ENCODE measurements at regions of chr16 and their contacts with region 1.

Region 1: DNA sequence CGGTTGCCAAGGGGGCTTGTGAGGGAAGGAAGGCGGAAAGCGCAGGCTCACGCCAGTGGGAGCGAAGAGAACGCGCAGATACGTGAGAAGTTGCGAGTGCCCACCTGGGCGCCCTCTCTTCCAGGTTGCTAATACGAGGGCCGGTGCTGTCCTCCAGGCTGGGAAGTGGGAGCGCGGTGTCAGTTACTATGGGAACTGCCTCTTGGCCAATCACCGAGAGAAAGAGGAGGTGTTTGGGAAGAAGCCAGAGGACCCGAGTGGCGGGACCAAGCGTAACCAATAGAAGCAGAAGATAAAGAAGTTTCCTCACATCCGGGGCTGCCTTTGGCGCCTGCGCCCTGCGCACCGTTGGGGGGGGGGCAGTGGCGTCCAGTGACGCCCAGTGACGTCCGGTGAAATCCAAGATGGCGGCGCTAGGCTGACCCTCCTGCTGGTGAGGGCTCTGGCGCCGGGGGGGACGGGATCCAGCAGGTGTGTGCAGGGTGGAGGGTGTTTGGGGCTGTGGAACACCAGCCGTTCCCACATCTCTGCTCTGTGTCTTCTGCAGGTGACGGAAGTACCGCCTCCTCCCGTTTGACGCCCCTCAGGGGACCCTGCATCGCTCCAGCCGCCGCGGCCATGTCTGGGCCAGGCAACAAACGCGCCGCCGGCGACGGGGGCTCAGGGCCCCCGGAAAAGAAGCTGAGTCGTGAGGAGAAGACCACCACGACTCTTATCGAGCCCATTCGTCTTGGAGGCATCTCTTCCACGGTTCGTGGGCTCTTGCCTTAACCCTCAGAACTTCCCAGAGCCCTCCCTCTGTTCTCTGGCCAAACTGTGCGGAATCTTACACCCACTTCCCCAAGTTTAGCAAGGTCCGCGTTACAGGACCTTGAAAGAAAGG is at the starts of genes CFAP119 and RNF40:
- DNase-seq: peak; percentile 73 to 97 (median 88)
- ATAC-seq: peak; percentile 96
- H3K4me3 ChIP-seq: peak within 1 kb of the TSS; percentile 99
- H3K4me3 Mint-ChIP-seq: peak within 1 kb of the TSS; percentile 96 to 98 (median 97)
- H3K27ac ChIP-seq: peak within 1 kb of the TSS; percentile 88
- H3K27ac Mint-ChIP-seq: peak within 1 kb of the TSS; percentile 82 to 96 (median 93)
- H3K4me1 ChIP-seq: peaks cover 17 to 31% of the 10 kb centered on the region in 2 donors
- H3K4me1 Mint-ChIP-seq: peaks cover 21 to 41% (median 32%) of the 10 kb centered on the region in 7 donors
- H3K27me3 ChIP-seq: no peaks in the 10 kb centered on the region
- H3K27me3 Mint-ChIP-seq: no peaks in the 10 kb centered on the region
- total RNA-seq, gene CFAP119: 2.3 to 5.9 (median 2.9) TPM
- total RNA-seq, gene RNF40: 68.7 to 122 (median 114) TPM

Region 2: DNA sequence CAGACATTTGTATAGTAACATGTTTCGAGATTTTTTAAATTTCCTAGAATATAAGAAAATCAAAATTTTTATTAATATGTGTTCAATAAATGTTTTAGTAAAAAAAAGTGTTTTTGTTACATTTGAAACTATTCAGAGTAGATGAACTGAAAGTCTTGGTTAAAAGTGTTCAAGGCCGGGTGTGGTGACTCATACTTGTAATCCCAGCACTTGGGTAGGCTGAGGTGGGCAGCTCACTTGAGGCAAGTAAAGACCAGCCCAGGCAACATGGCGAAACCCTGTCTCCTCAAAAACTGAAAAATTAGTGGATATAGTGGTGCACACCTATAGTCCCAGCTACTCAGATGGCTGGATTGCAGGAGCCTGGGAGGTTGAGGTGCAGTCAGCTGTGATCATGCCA is 30.8 kb before region 1 on chr16:
- CTCF ChIA-PET with region 1: no interaction called
- POLR2A ChIA-PET with region 1: no interaction called
- intact Hi-C with region 1: no loop called
- DNase-seq: no peak
- ATAC-seq: no peak
- H3K4me3 ChIP-seq: no peak overlapping the region
- H3K4me3 Mint-ChIP-seq: no peak overlapping the region
- H3K27ac ChIP-seq: no peak overlapping the region
- H3K27ac Mint-ChIP-seq: peak overlapping the region in 1 of 9 donors; percentile 14
- H3K4me1 ChIP-seq: no peaks in the 10 kb centered on the region
- H3K4me1 Mint-ChIP-seq: peaks cover 0 to 12% (median 2%) of the 10 kb centered on the region in 7 donors
- H3K27me3 ChIP-seq: no peaks in the 10 kb centered on the region
- H3K27me3 Mint-ChIP-seq: no peaks in the 10 kb centered on the region

Region 3: GRCh38 chr16:30775392-30776188 is 13.4 kb after region 1 on chr16:
- CTCF ChIA-PET with region 1: interaction called, 3 read pairs
- POLR2A ChIA-PET with region 1: interaction called, 9 read pairs
- intact Hi-C with region 1: loop called (anchors 1 kb)
- DNase-seq: peak; percentile 32 to 64 (median 51)
- ATAC-seq: peak; percentile 84
- H3K4me3 ChIP-seq: peak overlapping the region; percentile 57
- H3K4me3 Mint-ChIP-seq: peak overlapping the region; percentile 85 to 97 (median 90)
- H3K27ac ChIP-seq: peak overlapping the region; percentile 62
- H3K27ac Mint-ChIP-seq: peak overlapping the region in 7 of 9 donors; percentile 34 to 95 (median 73)
- H3K4me1 ChIP-seq: peaks cover 0 to 4% of the 10 kb centered on the region in 2 donors
- H3K4me1 Mint-ChIP-seq: peaks cover 15 to 40% (median 25%) of the 10 kb centered on the region in 7 donors
- H3K27me3 ChIP-seq: no peaks in the 10 kb centered on the region
- H3K27me3 Mint-ChIP-seq: peaks cover 0 to 5% (median 0%) of the 10 kb centered on the region in 5 donors

Region 4: DNA sequence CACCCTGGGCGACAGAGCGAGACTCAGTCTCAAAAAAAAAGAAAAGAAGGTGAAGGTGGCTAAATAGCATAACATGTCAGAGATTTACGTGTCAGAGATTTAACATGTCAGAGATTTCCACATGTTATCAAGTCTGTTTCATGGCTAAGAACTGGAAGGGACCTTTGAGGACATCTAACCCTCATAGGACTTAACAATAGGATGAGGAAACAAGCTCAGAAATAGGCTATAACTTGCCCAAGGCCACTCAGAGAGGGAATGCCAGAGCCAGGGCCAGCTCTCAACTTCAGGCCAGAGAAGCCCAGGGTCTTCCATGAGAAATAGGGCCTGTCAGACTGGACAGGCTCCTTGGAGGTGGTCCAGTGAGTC is 51.6 kb after region 1 on chr16:
- CTCF ChIA-PET with region 1: interaction called, 3 read pairs
- POLR2A ChIA-PET with region 1: interaction called, 3 read pairs
- intact Hi-C with region 1: loop called (anchors 1 kb)
- DNase-seq: no peak
- ATAC-seq: no peak
- H3K4me3 ChIP-seq: peak overlapping the region; percentile 70
- H3K4me3 Mint-ChIP-seq: peak overlapping the region; percentile 84 to 92 (median 86)
- H3K27ac ChIP-seq: peak overlapping the region; percentile 73
- H3K27ac Mint-ChIP-seq: peak overlapping the region; percentile 61 to 98 (median 88)
- H3K4me1 ChIP-seq: peaks cover 7% of the 10 kb centered on the region in 2 donors
- H3K4me1 Mint-ChIP-seq: peaks cover 5 to 15% (median 13%) of the 10 kb centered on the region in 7 donors
- H3K27me3 ChIP-seq: no peaks in the 10 kb centered on the region
- H3K27me3 Mint-ChIP-seq: peaks cover 0 to 3% (median 0%) of the 10 kb centered on the region in 5 donors

Region 5: DNA sequence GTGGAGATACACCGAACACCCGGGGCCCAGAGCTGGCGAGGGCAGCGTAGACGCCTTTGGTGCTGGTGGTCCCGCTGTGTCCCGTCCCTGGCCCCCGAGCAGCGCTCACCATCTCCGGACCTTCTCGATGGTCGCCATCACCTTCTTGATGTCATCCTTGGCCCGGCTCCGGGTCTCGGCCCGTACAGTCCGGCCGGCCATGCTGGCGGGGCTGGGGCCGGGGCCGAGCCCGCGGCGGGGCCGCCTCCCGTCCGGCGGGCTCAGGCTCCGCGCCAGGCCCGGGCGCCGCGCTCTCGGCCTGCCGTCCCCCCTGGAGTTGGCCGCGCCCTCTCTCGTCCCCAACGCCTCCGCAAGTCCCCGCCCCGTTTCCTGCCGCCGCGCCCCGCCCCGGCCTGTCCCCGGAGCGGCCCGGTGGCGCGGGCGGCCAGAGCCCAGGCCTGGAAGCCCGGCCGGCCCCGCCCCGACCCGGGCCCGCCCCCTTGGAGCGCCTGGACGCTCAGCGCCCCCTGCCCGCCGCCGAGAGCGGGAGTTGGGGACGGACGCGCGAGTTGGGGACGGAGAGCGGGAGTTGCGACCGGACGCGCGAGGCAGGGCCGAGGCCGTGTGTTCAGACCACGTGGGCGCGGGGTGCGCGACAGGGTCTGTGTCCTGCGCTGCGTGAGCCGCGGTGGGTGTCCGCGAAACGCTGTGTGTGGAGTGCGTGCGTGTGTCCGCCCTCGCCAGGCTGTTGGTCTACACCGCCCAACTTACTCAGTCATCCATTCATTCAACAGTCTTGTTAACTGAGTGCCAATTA is 131.8 kb after region 1 on chr16 and contains the start of gene BCL7C:
- CTCF ChIA-PET with region 1: no interaction called
- POLR2A ChIA-PET with region 1: no interaction called
- intact Hi-C with region 1: loop called in 1 of 2 experiments (anchors 5 kb)
- DNase-seq: peak; percentile 48 to 96 (median 61)
- ATAC-seq: peak; percentile 85
- H3K4me3 ChIP-seq: peak within 1 kb of the TSS; percentile 82
- H3K4me3 Mint-ChIP-seq: peak within 1 kb of the TSS; percentile 84 to 96 (median 90)
- H3K27ac ChIP-seq: peak within 1 kb of the TSS; percentile 82
- H3K27ac Mint-ChIP-seq: peak within 1 kb of the TSS; percentile 80 to 94 (median 91)
- H3K4me1 ChIP-seq: peaks cover 25 to 34% of the 10 kb centered on the region in 2 donors
- H3K4me1 Mint-ChIP-seq: peaks cover 26 to 60% (median 48%) of the 10 kb centered on the region in 7 donors
- H3K27me3 ChIP-seq: no peaks in the 10 kb centered on the region
- H3K27me3 Mint-ChIP-seq: no peaks in the 10 kb centered on the region
- total RNA-seq, gene BCL7C: 17.2 to 23.7 (median 22.7) TPM